Activated CD4-positive, alpha-beta memory T cell treated with anti-CD3 and anti-CD28 coated beads for 36 hours (primary cell): ENCODE measurements at regions of chr13 and their contacts with region 1.

Region 1: GRCh38 chr13:49606747-49607648 is 21.3 kb upstream of the ARL11 start:
- DNase-seq: peak; percentile 89
- H3K4me3 Mint-ChIP-seq: peak overlapping the region; percentile 74
- H3K27ac Mint-ChIP-seq: no peak overlapping the region
- H3K4me1 Mint-ChIP-seq: peaks cover 2% of the 10 kb centered on the region
- H3K27me3 Mint-ChIP-seq: no peaks in the 10 kb centered on the region

Region 2: DNA sequence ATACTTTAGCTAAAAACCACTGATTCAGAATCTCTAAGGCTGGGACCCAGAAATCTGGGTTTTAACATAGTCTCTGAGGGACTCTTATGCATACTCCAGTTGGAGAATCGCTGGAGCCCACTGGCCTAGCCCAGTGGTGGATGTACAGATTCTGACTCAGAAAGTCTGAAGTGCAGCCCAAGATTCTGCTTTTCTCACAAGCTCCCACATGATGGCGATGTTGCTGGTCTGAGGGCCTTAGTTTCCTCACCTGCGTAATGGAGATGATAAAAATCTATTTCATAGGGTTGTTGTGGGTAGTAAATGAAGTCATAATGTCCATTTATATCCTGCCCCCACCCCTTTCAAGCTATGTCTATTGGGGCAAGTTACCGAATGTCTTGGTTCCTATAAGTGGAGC is 367.0 kb before region 1 on chr13:
- CTCF ChIA-PET with region 1: interaction called, 4 read pairs
- POLR2A ChIA-PET with region 1: no interaction called
- intact Hi-C with region 1: loop called (anchors 1 kb)
- DNase-seq: peak; percentile 60
- H3K4me3 Mint-ChIP-seq: no peak overlapping the region
- H3K27ac Mint-ChIP-seq: no peak overlapping the region
- H3K4me1 Mint-ChIP-seq: no peaks in the 10 kb centered on the region
- H3K27me3 Mint-ChIP-seq: peaks cover 2% of the 10 kb centered on the region

Region 3: DNA sequence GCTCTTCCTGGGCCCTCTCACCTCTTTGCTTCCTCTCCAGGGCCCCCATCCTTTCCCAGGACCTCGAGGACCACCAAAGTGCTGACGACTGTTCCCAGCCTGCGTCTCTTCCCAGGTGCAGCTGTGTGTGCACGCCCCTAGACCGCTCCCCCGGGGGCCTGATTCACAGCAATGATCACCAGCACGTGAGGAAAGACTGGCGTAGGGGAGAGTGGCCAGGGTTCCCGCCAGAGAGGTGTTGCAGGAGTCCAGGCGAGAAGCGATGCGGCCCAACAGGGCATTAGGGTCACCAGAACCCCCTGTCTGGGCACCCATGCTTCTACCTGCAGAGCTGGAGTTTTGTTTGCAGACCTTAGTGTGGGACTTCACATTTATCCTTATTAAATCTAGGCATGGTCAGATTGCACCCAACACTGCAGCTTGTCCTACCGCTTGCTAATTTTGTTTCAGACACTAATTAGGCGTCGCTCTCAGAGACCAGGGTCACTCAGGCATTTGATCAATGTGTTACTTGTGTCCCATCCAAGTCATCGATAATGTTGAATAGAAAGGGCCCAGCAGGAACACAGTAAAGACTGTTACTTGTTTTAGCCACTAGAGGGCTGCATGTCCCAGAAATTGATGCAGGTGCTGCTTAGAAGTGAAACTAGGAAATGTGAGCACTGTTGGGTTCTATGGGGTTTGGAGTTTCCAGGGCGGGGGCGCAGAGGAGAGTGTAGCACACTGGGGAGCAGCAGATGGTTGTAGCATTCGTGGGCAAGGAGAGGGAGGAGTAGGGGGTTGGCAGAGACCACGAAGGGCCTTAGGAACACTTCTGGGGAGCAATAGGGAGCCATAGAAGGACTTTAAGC is 306.0 kb before region 1 on chr13:
- CTCF ChIA-PET with region 1: interaction called, 9 read pairs
- POLR2A ChIA-PET with region 1: no interaction called
- intact Hi-C with region 1: loop called (anchors 1 kb)
- DNase-seq: peak; percentile 75
- H3K4me3 Mint-ChIP-seq: peak overlapping the region; percentile 33
- H3K27ac Mint-ChIP-seq: no peak overlapping the region
- H3K4me1 Mint-ChIP-seq: peaks cover 9% of the 10 kb centered on the region
- H3K27me3 Mint-ChIP-seq: no peaks in the 10 kb centered on the region

Region 4: DNA sequence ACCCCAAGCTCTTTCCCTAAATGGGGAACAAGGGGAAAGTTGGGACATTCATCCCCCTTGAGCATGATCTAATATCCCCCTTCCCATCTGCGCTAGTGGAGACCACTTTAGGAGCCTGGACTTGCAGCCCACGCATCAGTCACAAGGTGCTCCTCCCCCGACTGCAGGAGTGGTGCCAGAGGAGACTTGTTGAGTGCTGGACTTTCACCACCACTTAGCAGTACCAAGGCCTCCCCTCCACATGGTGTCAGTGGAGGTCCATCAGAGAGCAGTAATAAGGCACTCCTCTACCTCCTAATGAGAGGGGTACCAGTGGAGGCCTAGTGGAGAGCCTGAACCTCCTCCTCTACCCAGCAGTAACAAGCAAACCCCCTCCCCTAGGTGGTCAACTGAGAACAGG is 185.6 kb before region 1 on chr13:
- CTCF ChIA-PET with region 1: no interaction called
- POLR2A ChIA-PET with region 1: no interaction called
- intact Hi-C with region 1: loop called (anchors 1 kb)
- DNase-seq: peak; percentile 43
- H3K4me3 Mint-ChIP-seq: no peak overlapping the region
- H3K27ac Mint-ChIP-seq: no peak overlapping the region
- H3K4me1 Mint-ChIP-seq: no peaks in the 10 kb centered on the region
- H3K27me3 Mint-ChIP-seq: no peaks in the 10 kb centered on the region

Region 5: DNA sequence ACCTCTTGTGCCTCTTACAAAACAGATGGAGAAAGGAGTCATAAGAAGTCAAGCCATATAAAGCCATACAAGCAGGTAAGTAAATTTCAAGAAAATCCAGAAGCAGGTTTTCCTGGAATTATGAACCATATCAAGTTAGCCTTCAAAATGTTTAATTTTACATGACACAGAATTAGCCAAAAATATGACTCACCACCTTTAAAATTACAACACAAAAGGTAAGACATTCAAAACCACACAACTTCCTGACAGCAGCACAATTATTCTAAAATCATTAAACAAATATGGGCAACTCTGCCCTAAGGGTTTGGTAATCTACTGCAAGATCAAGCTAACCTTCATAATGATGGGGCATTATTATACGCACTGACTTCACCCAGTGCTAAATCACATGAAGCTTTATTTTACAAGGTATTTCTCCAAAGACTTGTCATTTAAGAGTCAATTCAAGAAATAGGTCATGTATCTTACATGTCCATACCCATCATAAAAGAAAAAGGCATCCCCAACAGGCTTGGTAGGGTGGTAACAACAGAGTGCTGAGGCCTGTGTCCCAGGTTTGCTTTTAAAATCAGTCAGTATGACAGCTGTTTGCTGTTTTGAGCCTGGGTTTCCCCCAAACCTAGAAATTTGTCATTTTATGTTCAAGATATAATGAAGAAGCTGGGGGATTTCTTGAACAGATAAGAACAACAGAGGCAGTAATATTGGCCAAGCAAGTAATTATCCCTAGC is 36.9 kb before region 1 on chr13:
- CTCF ChIA-PET with region 1: no interaction called
- POLR2A ChIA-PET with region 1: no interaction called
- intact Hi-C with region 1: loop called (anchors 1 kb)
- DNase-seq: peak; percentile 43
- H3K4me3 Mint-ChIP-seq: no peak overlapping the region
- H3K27ac Mint-ChIP-seq: peak overlapping the region; percentile 88
- H3K4me1 Mint-ChIP-seq: peaks cover 33% of the 10 kb centered on the region
- H3K27me3 Mint-ChIP-seq: no peaks in the 10 kb centered on the region